Endothelial cell of umbilical vein (primary cell): ENCODE measurements at regions of chr3 and their contacts with region 1.

Region 1: DNA sequence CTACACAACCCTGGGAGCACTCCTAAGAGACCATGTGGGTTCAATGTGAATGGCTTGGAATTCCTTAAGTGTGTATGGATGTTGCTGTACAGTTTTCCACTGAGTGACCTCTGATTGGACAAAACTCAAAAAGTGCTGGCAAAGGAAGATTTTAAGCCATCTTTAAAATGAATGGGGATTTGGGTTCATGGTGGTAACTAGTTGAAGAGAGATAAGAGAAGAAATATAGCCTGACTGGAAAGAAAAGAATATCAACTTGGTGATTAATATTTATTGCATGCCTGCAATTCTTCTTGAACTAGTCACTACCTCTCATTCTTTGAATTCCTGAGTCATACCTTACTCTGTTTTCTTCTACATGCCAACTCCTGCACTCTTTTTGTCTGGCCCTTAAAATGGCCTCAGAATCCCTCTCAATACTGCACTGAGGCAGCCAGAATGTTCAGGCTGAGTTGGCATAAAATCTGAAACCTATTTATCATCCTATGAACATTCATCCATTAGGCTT is 124.7 kb downstream of the RPL22L1 start:
- DNase-seq: peak; percentile 89
- H3K4me3 ChIP-seq: no peak overlapping the region
- H3K27ac ChIP-seq: peak overlapping the region; percentile 90
- H3K4me1 ChIP-seq: peaks cover 64% of the 10 kb centered on the region
- H3K27me3 ChIP-seq: no peaks in the 10 kb centered on the region
- CTCF ChIP-seq: no peak
- POLR2A ChIP-seq: peak; percentile 56

Region 2: DNA sequence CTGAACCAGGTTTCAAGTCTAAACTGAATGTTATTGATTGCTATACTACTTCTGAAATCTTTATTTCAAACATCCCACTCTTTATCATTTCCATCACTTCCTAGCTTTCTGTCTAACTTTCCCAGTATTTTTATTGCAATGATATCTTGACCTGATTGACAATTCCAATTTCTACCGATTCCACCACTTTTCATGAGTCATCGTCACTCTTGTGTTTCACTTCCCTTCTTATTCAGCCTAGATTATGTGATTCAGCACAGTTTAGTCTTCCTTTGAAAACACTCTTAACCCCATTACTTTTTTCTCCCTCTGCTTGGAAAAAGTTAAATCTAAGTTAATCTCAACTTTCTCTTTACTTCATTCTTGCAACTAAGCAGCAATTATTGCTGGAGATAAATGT is 222.0 kb before region 1 on chr3:
- CTCF ChIA-PET with region 1: no interaction called
- POLR2A ChIA-PET with region 1: no interaction called
- dilution Hi-C with region 1: no loop called
- intact Hi-C with region 1: loop called (anchors 5 kb)
- DNase-seq: peak; percentile 77
- H3K4me3 ChIP-seq: no peak overlapping the region
- H3K27ac ChIP-seq: peak overlapping the region; percentile 45
- H3K4me1 ChIP-seq: peaks cover 11% of the 10 kb centered on the region
- H3K27me3 ChIP-seq: no peaks in the 10 kb centered on the region
- CTCF ChIP-seq: no peak
- POLR2A ChIP-seq: no peak

Region 3: DNA sequence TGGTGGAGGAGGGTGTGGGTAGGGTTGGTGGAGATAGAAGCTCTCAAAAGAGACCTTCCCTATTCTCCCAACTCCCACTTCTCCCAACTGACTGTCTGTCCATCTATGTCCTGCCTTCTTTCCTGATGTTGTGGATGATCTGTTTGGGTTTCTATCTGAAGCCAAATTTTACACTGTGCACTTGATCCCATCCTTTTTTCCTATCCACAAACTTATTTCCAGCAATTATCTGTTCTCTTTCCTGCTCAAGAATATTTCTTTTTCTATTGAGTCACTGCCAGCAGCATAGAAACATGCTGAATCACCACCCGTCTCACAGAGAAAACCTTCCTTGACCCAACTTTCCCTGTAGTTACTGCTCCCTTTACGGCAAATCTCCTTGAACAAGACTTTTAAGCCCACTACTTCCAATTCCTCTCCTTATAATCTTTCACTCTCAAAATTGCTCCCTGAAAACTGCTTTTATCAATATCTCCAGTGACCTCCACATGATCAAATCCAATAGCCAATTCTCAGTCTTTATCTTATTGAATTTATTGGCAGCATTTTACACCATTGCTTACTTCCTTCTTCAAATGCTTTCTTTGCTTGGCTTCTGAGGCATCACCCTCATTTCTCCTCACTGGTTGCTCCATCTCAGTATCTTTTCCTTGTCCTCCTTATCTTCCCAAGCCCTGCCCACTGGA is 18.1 kb before region 1 on chr3:
- CTCF ChIA-PET with region 1: interaction called, 3 read pairs
- POLR2A ChIA-PET with region 1: no interaction called
- dilution Hi-C with region 1: no loop called
- intact Hi-C with region 1: loop called (anchors 1 kb)
- DNase-seq: peak; percentile 85
- H3K4me3 ChIP-seq: no peak overlapping the region
- H3K27ac ChIP-seq: peak overlapping the region; percentile 89
- H3K4me1 ChIP-seq: peaks cover 22% of the 10 kb centered on the region
- H3K27me3 ChIP-seq: no peaks in the 10 kb centered on the region
- CTCF ChIP-seq: no peak
- POLR2A ChIP-seq: no peak